Activated CD8-positive, alpha-beta T cell treated with anti-CD3 and anti-CD28 coated beads, Interleukin-2, amount 10 ng/mL, durations not matched to agents 7 days and 5 days (primary cell): ENCODE measurements at regions of chr11 and their contacts with region 1.

Region 1: GRCh38 chr11:33065445-33066178 is 26.2 kb downstream of the TCP11L1 start:
- DNase-seq: peak; percentile 79
- ATAC-seq: peak; percentile 89
- H3K4me3 Mint-ChIP-seq: no peak overlapping the region
- H3K27ac Mint-ChIP-seq: no peak overlapping the region
- H3K4me1 Mint-ChIP-seq: peaks cover 29% of the 10 kb centered on the region
- H3K27me3 Mint-ChIP-seq: no peaks in the 10 kb centered on the region

Region 2: DNA sequence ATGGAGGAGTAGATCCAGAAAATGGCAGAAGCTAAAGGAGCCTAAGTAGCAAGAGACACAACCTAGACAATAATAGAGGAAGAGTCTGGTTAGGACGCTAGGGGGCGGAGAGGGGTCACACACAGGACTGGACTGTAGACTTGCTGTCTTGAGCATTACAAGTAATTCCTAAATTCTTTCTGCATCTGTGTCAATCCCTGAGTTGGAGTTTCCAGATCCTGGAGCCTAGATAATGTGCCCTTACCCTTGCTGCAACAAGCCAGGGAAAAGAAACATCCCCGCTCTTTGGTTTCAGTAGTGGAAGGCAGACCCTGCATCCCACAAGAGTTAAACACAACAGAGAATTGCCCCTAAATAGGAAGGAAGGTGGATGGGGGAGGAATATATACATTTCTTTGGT is 256.3 kb before region 1 on chr11:
- CTCF ChIA-PET with region 1: interaction called, 15 read pairs
- POLR2A ChIA-PET with region 1: no interaction called
- DNase-seq: peak; percentile 71
- ATAC-seq: peak; percentile 95
- H3K4me3 Mint-ChIP-seq: no peak overlapping the region
- H3K27ac Mint-ChIP-seq: no peak overlapping the region
- H3K4me1 Mint-ChIP-seq: no peaks in the 10 kb centered on the region
- H3K27me3 Mint-ChIP-seq: peaks cover 2% of the 10 kb centered on the region

Region 3: GRCh38 chr11:32960553-32961164 is 105.0 kb before region 1 on chr11:
- CTCF ChIA-PET with region 1: interaction called, 76 read pairs
- POLR2A ChIA-PET with region 1: interaction called, 3 read pairs
- DNase-seq: no peak
- ATAC-seq: peak; percentile 57
- H3K4me3 Mint-ChIP-seq: no peak overlapping the region
- H3K27ac Mint-ChIP-seq: no peak overlapping the region
- H3K4me1 Mint-ChIP-seq: no peaks in the 10 kb centered on the region
- H3K27me3 Mint-ChIP-seq: no peaks in the 10 kb centered on the region

Region 4: DNA sequence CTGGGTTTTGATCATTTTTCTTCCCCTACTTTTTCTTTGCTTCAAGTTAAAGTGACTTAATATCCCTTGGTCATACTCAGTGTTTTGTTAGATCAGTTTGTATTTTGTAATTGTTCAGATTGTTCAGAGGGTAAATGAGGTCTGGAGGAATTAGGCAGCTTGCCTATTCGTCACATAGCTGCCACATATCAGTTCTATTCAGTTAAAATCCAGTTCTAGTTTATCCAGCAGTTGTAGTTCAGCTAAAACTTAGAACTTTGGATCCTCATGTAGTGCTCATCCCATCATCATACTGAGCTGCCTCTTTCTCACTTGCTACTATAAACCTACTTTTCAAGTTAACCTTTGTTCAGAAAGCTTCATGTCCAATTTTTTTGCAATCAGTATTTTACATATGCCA is 97.1 kb before region 1 on chr11:
- CTCF ChIA-PET with region 1: interaction called, 56 read pairs
- POLR2A ChIA-PET with region 1: interaction called, 3 read pairs
- DNase-seq: no peak
- ATAC-seq: no peak
- H3K4me3 Mint-ChIP-seq: no peak overlapping the region
- H3K27ac Mint-ChIP-seq: no peak overlapping the region
- H3K4me1 Mint-ChIP-seq: peaks cover 8% of the 10 kb centered on the region
- H3K27me3 Mint-ChIP-seq: no peaks in the 10 kb centered on the region

Region 5: GRCh38 chr11:33039274-33040032 is 26.2 kb before region 1 on chr11 and contains the start of gene TCP11L1:
- CTCF ChIA-PET with region 1: interaction called, 9 read pairs
- POLR2A ChIA-PET with region 1: interaction called, 11 read pairs
- DNase-seq: peak; percentile 85
- ATAC-seq: peak; percentile 90
- H3K4me3 Mint-ChIP-seq: peak within 1 kb of the TSS; percentile 90
- H3K27ac Mint-ChIP-seq: peak within 1 kb of the TSS; percentile 97
- H3K4me1 Mint-ChIP-seq: peaks cover 28% of the 10 kb centered on the region
- H3K27me3 Mint-ChIP-seq: peaks cover 8% of the 10 kb centered on the region
- total RNA-seq, gene TCP11L1: 17.2 to 21.0 TPM

Region 6: DNA sequence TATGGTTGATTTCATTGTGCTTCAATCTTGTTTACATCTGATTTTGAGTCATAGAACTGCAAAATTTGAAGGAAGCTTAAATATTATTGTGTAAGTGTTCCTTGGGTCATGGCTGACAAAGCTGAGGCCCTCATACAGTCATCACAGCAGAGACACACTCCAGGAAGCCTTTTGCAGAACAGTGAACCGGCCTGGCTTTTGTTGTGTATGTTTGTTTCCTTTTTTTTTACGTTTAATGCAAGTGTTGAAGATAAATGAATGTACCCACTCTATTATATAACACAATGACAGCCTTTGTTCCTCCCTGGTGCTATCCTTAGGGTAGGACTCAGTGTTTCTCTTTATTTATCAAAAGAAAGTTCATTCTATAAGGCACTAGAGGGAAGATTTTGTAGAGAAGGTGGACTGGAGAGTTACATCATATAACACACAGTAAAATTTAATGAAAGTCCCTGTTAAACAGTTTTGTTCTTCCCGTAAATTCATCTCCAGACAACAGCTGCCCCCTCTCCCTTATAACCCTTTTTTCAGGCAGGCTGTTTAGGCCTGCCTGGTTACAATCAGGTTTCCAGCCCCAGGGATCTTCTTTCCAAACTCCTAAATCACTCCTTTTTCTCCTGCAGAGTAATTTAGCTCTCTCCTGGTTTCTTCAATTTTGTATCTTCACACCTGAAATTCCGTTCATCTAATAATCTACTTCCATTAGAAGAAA is 130.0 kb after region 1 on chr11:
- CTCF ChIA-PET with region 1: no interaction called
- POLR2A ChIA-PET with region 1: no interaction called
- DNase-seq: no peak
- ATAC-seq: no peak
- H3K4me3 Mint-ChIP-seq: no peak overlapping the region
- H3K27ac Mint-ChIP-seq: no peak overlapping the region
- H3K4me1 Mint-ChIP-seq: no peaks in the 10 kb centered on the region
- H3K27me3 Mint-ChIP-seq: no peaks in the 10 kb centered on the region